Testis (tissue), 5 donors: ENCODE measurements at regions of chr22 and their contacts with region 1.

Region 1: GRCh38 chr22:32991353-32992121 is 66.6 kb downstream of the SYN3 start:
- DNase-seq: no peak
- H3K4me3 ChIP-seq: no peak overlapping the region
- H3K27ac ChIP-seq: no peak overlapping the region
- H3K4me1 ChIP-seq: peaks cover 10% of the 10 kb centered on the region
- H3K27me3 ChIP-seq: no peaks in the 10 kb centered on the region
- CTCF ChIP-seq: no peak
- POLR2A ChIP-seq: no peak

Region 2: GRCh38 chr22:32649515-32650200 is 341.9 kb before region 1 on chr22:
- intact Hi-C with region 1: loop called (anchors 5 kb)
- DNase-seq: no peak
- H3K4me3 ChIP-seq: no peak overlapping the region
- H3K27ac ChIP-seq: peak overlapping the region in 1 of 2 donors; percentile 73
- H3K4me1 ChIP-seq: peaks cover 9% of the 10 kb centered on the region
- H3K27me3 ChIP-seq: no peaks in the 10 kb centered on the region
- CTCF ChIP-seq: no peak
- POLR2A ChIP-seq: no peak

Region 3: GRCh38 chr22:32796865-32797573 is 194.5 kb before region 1 on chr22:
- intact Hi-C with region 1: loop called (anchors 5 kb)
- DNase-seq: peak; percentile 84
- H3K4me3 ChIP-seq: no peak overlapping the region
- H3K27ac ChIP-seq: no peak overlapping the region
- H3K4me1 ChIP-seq: peaks cover 14% of the 10 kb centered on the region
- H3K27me3 ChIP-seq: no peaks in the 10 kb centered on the region
- CTCF ChIP-seq: peak; percentile 72 to 90 (median 85)
- POLR2A ChIP-seq: no peak

Region 4: GRCh38 chr22:33028234-33028633 is 36.7 kb after region 1 on chr22:
- intact Hi-C with region 1: no loop called
- DNase-seq: no peak
- H3K4me3 ChIP-seq: no peak overlapping the region
- H3K27ac ChIP-seq: no peak overlapping the region
- H3K4me1 ChIP-seq: no peaks in the 10 kb centered on the region
- H3K27me3 ChIP-seq: no peaks in the 10 kb centered on the region
- CTCF ChIP-seq: no peak
- POLR2A ChIP-seq: no peak